ENCODE measurements at regions of chr3 and their contacts with region 1.

Region 1: GRCh38 chr3:161220850-161221753 is at the start of gene NMD3:
- DNase-seq: peak; percentile 96
- H3K4me3 Mint-ChIP-seq: peak within 1 kb of the TSS; percentile 87
- H3K27ac Mint-ChIP-seq: peak within 1 kb of the TSS; percentile 84
- H3K4me1 Mint-ChIP-seq: peaks cover 23% of the 10 kb centered on the region
- H3K27me3 Mint-ChIP-seq: peaks cover 3% of the 10 kb centered on the region
- total RNA-seq, gene NMD3: 65.8 to 70.8 TPM

Region 2: GRCh38 chr3:160565442-160566403 is 655.4 kb before region 1 on chr3 and contains the start of gene KPNA4:
- CTCF ChIA-PET with region 1: no interaction called
- POLR2A ChIA-PET with region 1: no interaction called
- intact Hi-C with region 1: loop called (anchors 1 kb)
- DNase-seq: peak; percentile 97
- H3K4me3 Mint-ChIP-seq: peak within 1 kb of the TSS; percentile 93
- H3K27ac Mint-ChIP-seq: peak within 1 kb of the TSS; percentile 97
- H3K4me1 Mint-ChIP-seq: peaks cover 45% of the 10 kb centered on the region
- H3K27me3 Mint-ChIP-seq: no peaks in the 10 kb centered on the region
- total RNA-seq, gene KPNA4: 44.9 to 48.4 TPM

Region 3: GRCh38 chr3:160754855-160755747 is 466.0 kb before region 1 on chr3:
- CTCF ChIA-PET with region 1: no interaction called
- POLR2A ChIA-PET with region 1: interaction called, 3 read pairs
- intact Hi-C with region 1: loop called (anchors 2 kb)
- DNase-seq: peak; percentile 94
- H3K4me3 Mint-ChIP-seq: peak overlapping the region; percentile 95
- H3K27ac Mint-ChIP-seq: peak overlapping the region; percentile 90
- H3K4me1 Mint-ChIP-seq: peaks cover 26% of the 10 kb centered on the region
- H3K27me3 Mint-ChIP-seq: peaks cover 12% of the 10 kb centered on the region

Region 4: DNA sequence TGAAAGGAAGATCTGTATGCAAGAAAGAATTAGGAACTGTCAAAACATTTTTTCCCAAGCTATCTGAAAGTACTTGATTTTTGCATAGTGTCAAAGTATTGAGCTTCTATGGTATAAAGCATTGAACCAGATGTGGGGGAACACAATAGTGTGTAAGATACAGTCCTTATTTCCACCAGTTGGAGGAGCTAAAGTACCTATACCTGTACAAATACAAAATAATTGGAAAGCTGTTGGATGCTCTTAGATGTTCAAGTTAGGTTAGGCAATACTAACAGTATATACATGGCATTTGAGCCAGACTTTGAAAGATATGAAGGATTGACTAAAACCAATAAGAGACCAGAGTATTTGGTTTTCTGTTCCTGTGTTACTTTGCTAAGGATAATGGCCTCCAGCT is 264.3 kb before region 1 on chr3:
- CTCF ChIA-PET with region 1: interaction called, 3 read pairs
- POLR2A ChIA-PET with region 1: no interaction called
- intact Hi-C with region 1: loop called (anchors 5 kb)
- DNase-seq: no peak
- H3K4me3 Mint-ChIP-seq: no peak overlapping the region
- H3K27ac Mint-ChIP-seq: no peak overlapping the region
- H3K4me1 Mint-ChIP-seq: no peaks in the 10 kb centered on the region
- H3K27me3 Mint-ChIP-seq: peaks cover 4% of the 10 kb centered on the region

Region 5: DNA sequence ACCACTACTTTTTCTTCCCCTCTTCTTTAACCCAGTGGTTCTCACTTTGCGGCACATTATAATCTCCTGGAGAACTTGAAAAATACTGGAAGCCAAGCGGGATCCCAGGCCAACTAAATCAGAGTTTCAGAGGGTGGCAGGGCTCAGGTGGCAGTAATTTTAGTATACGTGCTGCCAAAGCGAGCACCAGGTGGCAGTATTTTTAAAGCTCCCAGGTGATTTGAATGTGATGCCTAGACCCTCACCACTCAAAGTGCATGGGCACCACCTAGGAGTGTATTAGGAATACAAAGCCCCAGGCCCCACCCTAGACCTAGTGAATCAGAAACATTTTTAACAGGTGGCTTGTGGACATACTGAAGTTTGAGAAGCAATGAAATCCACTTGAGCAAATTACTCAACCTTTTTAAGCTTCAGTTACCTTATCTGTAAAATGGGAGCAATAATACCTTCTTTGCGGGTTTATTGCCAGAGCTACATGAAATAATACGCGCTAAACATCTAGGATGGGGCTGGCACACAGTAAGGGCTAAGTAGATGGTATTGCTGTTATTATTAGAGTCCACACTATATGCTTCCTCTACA is 124.2 kb before region 1 on chr3:
- CTCF ChIA-PET with region 1: no interaction called
- POLR2A ChIA-PET with region 1: no interaction called
- intact Hi-C with region 1: loop called (anchors 5 kb)
- DNase-seq: peak; percentile 27
- H3K4me3 Mint-ChIP-seq: no peak overlapping the region
- H3K27ac Mint-ChIP-seq: no peak overlapping the region
- H3K4me1 Mint-ChIP-seq: no peaks in the 10 kb centered on the region
- H3K27me3 Mint-ChIP-seq: peaks cover 2% of the 10 kb centered on the region

Region 6: DNA sequence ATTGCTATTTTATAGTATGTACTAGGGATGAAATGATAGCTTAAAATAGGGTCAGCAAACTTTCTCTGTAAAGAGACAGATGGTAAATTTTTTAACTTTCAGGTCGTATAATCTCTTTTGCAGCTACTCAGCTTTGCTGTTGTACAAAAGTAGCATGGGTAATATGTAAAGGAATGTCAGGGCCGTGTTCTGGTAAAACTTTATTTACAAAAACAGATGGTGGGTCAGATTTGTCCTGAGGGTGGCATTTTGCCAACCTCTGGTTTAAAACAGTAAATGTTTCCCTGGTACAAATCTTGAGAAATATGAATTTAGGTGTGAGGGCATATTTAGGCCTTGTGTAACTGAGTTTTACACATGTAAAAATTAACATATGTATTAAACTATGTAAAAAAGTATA is 18.6 kb after region 1 on chr3:
- CTCF ChIA-PET with region 1: no interaction called
- POLR2A ChIA-PET with region 1: no interaction called
- intact Hi-C with region 1: no loop called
- DNase-seq: no peak
- H3K4me3 Mint-ChIP-seq: no peak overlapping the region
- H3K27ac Mint-ChIP-seq: no peak overlapping the region
- H3K4me1 Mint-ChIP-seq: peaks cover 10% of the 10 kb centered on the region
- H3K27me3 Mint-ChIP-seq: no peaks in the 10 kb centered on the region

Region 7: DNA sequence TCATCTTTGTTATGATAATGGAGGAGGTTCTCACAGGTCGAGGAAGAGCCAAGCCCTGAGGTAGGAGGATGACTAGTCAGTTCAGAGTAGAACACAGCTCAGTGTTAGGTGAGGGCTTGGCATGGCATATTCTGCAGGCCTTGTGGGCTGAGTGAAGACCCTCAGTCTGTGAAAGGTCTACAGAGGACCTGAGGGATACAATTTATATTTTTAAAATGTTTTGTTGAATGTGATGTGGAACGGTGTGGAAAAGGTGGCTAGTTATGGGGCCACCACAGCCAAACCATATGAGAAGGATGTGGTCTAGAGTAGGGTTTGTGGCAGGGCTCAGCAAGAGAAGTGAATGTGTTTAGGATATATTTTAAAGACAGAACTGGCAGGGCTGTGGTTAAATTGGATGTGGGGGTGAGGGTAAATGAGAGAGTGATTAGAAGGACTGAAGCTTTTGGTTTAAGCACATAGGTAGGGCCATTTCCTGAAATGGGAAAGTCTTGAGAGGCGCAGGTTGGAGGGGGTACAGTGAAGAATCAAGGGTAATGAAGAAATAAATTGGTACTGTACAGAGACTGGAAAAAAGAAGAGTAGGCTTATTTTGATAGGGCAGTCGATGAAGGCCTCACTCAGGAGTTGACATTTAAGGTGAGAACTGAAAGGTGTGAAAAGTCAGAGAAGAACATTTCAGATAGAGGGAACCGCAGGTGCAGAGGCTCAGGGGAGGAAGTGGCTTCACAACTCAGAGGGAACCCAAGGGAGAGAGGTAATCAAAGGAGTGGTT is 89.7 kb after region 1 on chr3:
- CTCF ChIA-PET with region 1: no interaction called
- POLR2A ChIA-PET with region 1: no interaction called
- intact Hi-C with region 1: loop called (anchors 2 kb)
- DNase-seq: peak; percentile 77
- H3K4me3 Mint-ChIP-seq: no peak overlapping the region
- H3K27ac Mint-ChIP-seq: peak overlapping the region; percentile 7
- H3K4me1 Mint-ChIP-seq: peaks cover 49% of the 10 kb centered on the region
- H3K27me3 Mint-ChIP-seq: peaks cover 3% of the 10 kb centered on the region

Region 8: GRCh38 chr3:161409069-161409468 is 188.0 kb after region 1 on chr3:
- CTCF ChIA-PET with region 1: no interaction called
- POLR2A ChIA-PET with region 1: no interaction called
- intact Hi-C with region 1: loop called (anchors 5 kb)
- DNase-seq: peak; percentile 23
- H3K4me3 Mint-ChIP-seq: no peak overlapping the region
- H3K27ac Mint-ChIP-seq: no peak overlapping the region
- H3K4me1 Mint-ChIP-seq: peaks cover 18% of the 10 kb centered on the region
- H3K27me3 Mint-ChIP-seq: peaks cover 5% of the 10 kb centered on the region